PC-9 (cell line): ENCODE measurements at regions of chr1 and their contacts with region 1.

Region 1: GRCh38 chr1:69737527-69738185 is 169.9 kb downstream of the LRRC7 start:
- DNase-seq: peak; percentile 26 to 40
- H3K4me3 ChIP-seq: no peak overlapping the region
- H3K27ac ChIP-seq: no peak overlapping the region
- H3K4me1 ChIP-seq: no peaks in the 10 kb centered on the region
- H3K27me3 ChIP-seq: no peaks in the 10 kb centered on the region
- CTCF ChIP-seq: peak; percentile 78

Region 2: GRCh38 chr1:68470388-68470970 is 1267.2 kb before region 1 on chr1:
- CTCF ChIA-PET with region 1: no interaction called
- POLR2A ChIA-PET with region 1: no interaction called
- intact Hi-C with region 1: loop called (anchors 1 kb)
- DNase-seq: no peak
- H3K4me3 ChIP-seq: no peak overlapping the region
- H3K27ac ChIP-seq: no peak overlapping the region
- H3K4me1 ChIP-seq: no peaks in the 10 kb centered on the region
- H3K27me3 ChIP-seq: no peaks in the 10 kb centered on the region
- CTCF ChIP-seq: peak; percentile 81

Region 3: GRCh38 chr1:68600049-68600661 is 1137.5 kb before region 1 on chr1:
- CTCF ChIA-PET with region 1: no interaction called
- POLR2A ChIA-PET with region 1: no interaction called
- intact Hi-C with region 1: loop called (anchors 10 kb)
- DNase-seq: peak in 1 of 2 experiments; percentile 8
- H3K4me3 ChIP-seq: peak overlapping the region; percentile 40
- H3K27ac ChIP-seq: no peak overlapping the region
- H3K4me1 ChIP-seq: no peaks in the 10 kb centered on the region
- H3K27me3 ChIP-seq: no peaks in the 10 kb centered on the region
- CTCF ChIP-seq: peak; percentile 92

Region 4: DNA sequence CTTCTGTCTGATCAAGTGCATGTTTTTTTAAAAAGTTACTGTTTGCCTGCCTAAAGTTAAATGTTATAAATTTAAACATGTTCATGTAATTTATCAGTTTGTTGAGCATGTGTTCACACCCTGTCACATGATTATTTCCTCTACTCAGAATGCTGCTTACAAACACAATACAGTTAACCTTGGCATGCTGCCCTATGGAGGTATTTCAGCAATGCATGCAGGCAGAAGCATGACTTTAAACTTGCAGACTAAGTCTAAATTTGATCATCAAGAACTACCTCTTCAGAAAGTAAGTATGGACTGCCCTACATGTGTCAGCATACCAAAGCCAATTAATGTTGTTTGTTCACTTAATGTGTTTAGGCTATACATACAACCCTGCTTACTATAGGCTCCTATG is 306.1 kb after region 1 on chr1:
- CTCF ChIA-PET with region 1: no interaction called
- POLR2A ChIA-PET with region 1: no interaction called
- intact Hi-C with region 1: no loop called
- DNase-seq: peak in 1 of 2 experiments; percentile 32
- H3K4me3 ChIP-seq: no peak overlapping the region
- H3K27ac ChIP-seq: no peak overlapping the region
- H3K4me1 ChIP-seq: peaks cover 17% of the 10 kb centered on the region
- H3K27me3 ChIP-seq: no peaks in the 10 kb centered on the region
- CTCF ChIP-seq: no peak